Left lung (tissue), 14 donors: ENCODE measurements at regions of chr19 and their contacts with region 1.

Region 1: DNA sequence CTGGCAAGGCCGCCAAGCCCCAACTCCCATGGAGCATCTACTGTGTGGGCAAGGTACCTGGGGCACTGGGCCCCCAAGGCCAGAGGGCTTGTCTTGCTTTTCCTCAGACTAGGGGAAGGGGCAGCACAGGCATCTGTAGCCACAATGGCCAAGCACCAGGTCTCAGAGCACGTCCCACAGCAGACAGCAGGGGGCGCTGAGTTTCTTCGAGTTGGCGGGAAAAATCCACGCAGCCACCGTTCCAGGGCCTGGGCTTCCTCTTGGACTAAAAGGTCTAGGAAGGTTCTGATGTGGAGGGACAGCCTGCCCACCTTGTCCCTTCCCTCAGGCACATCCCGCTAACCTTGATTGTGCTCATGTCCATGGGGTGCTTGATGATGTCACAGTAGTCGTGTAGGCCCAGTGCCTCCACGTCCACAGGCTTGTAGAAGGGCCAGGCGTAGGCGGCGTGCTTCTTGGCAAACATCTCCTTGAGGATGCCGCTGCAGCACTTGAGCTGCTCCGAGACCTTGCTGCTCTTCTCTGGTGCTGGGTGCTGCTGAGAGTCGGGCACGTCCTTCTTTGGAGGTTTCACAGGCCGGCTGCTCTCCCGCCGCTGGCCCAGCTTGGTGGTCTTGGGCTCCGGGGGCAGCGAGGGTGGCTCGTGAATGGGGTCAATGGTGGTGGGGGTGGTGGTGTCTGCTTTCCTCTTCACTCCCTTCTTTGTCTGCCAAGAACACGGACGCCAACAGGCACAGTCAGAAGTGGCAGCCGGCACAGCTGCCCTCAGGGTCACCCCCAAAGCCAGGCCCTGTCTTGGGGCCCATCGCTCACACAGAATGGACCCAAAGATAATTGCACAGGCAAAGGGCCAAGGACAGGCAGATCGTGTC is 32.0 kb upstream of the EPHX3 start:
- DNase-seq: peak; percentile 25 to 88 (median 68)
- ATAC-seq: peak; percentile 66
- H3K4me3 ChIP-seq: no peak overlapping the region
- H3K27ac ChIP-seq: peak overlapping the region in 1 of 2 donors; percentile 64
- H3K4me1 ChIP-seq: peaks cover 20 to 46% of the 10 kb centered on the region in 2 donors
- H3K27me3 ChIP-seq: no peaks in the 10 kb centered on the region
- CTCF ChIP-seq: peak; percentile 59 to 83

Region 2: GRCh38 chr19:15234043-15234873 is 30.0 kb before region 1 on chr19:
- intact Hi-C with region 1: no loop called
- DNase-seq: no peak
- ATAC-seq: no peak
- H3K4me3 ChIP-seq: no peak overlapping the region
- H3K27ac ChIP-seq: no peak overlapping the region
- H3K4me1 ChIP-seq: peaks cover 8 to 34% of the 10 kb centered on the region in 2 donors
- H3K27me3 ChIP-seq: peaks cover 0 to 42% of the 10 kb centered on the region in 2 donors
- CTCF ChIP-seq: no peak

Region 3: DNA sequence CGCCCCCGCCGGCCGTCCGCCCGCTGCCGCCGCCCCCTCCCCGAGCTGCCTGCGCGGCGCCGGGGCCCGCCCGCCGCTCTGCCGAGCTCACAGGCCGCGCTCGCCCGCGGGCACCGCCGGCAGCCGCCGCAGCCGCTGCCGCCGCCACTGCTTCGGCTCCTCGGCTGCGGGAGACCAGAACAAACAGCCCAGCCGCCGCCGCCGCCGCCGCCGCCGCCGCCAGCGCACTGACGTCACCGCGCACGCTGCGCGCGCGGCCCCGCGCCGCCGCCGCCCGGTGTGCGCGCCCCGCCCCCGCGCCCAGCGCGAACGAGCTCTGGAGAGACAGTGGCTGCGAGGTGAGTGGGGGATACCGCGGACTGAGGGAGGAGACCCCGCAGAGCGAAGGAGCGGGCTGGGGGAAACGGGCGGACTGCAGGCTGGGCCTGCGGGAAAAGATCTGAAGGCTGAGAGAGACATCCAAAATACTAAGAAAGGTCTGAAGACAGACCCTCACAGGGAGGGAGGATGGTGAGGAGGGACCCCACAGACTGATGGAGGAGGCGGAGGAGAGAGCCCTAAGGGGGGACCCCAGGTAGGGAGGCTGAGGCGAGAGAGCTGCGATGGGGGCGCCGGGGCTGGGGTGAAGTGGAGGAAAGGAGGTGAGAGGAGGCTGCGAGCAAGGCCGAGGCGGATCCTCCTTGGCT is 68.2 kb after region 1 on chr19 and contains the start of gene BRD4:
- intact Hi-C with region 1: loop called in 1 of 2 experiments (anchors 10 kb)
- DNase-seq: peak; percentile 64 to 91 (median 72)
- ATAC-seq: peak; percentile 79
- H3K4me3 ChIP-seq: peak within 1 kb of the TSS; percentile 96 to 97
- H3K27ac ChIP-seq: peak within 1 kb of the TSS; percentile 87 to 91
- H3K4me1 ChIP-seq: peaks cover 24 to 56% of the 10 kb centered on the region in 2 donors
- H3K27me3 ChIP-seq: no peaks in the 10 kb centered on the region
- CTCF ChIP-seq: no peak
- polyA plus RNA-seq, gene BRD4: 51.1 to 63.9 (median 55.8) TPM

Region 4: DNA sequence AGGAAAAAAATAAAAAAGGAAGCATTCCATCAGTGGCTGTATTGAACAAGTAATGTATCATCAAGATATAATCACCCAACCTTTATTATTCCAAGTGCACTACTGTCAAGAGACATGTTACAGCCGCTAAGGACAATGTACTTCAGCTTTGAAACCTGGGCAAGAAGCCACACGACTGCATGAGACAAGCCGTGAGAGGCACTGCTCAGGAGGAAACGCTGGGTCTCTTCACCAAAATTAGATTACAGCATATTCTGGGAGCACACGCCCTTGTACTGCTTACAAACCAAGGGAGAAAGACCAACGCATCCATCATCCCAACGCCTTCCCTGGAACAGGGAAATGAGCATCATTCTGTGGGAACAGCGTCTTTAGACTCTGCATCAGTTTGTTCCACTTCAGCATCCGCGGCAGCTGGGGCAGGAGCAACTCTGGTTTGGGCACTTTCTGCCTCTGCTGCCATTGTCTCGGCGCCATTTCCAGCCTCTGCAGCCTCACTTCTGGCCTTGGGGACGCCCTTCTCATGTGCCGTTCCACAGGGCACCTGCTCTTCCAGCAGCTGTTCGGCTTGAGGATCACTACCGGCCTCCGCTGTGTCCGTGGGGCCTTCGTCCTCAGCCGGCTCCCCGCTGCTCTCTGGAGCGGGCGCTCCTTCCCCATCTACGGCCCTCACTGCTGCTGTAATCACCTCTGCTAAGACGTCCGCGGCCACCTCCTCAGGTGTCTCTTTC is 90.4 kb after region 1 on chr19:
- intact Hi-C with region 1: no loop called
- DNase-seq: peak in 1 of 4 donors; percentile 75
- ATAC-seq: peak; percentile 31
- H3K4me3 ChIP-seq: no peak overlapping the region
- H3K27ac ChIP-seq: no peak overlapping the region
- H3K4me1 ChIP-seq: no peaks in the 10 kb centered on the region
- H3K27me3 ChIP-seq: no peaks in the 10 kb centered on the region
- CTCF ChIP-seq: no peak